ENCODE measurements at regions of chr13 and their contacts with region 1.

Region 1: DNA sequence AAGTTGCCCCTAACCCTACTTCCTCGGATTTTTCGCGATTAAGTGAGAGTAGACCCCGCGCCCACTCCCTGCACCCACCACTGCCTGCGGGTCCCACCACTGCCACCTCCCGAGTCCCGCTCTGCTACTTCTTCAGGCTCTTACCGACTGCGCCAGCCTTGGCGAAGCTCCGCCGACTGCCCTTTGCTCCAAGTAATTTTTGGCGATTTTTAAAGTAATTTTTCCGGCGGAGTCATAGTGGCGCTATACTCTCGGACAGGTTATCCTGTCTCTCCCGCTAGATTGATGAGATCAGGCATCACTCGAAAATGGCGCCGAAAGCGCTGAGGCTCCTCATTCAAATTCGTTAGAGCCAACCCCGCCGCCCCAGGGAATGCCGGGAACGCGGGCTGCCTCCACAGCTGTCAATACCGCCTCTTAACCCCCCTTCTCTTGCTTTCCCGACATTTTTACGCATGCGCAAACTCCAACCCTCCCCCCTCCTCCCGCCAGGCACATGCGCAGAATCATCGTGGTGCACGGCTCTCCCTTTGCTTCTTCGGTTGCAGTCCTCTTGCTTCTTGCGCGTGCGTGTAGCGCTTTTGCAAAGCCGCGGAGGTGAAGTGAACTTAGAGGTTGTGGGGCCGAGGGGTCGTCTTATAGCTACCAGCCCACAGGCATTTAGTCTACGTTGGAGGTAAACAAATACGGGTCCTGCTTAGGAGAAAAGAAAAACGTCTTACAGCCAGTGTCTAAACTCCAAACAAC is 66.6 kb downstream of the KCNRG start:
- DNase-seq: peak; percentile 98
- H3K4me3 ChIP-seq: peak overlapping the region; percentile 70 to 83
- H3K27ac ChIP-seq: peak overlapping the region; percentile 93 to 98
- H3K4me1 ChIP-seq: no peaks in the 10 kb centered on the region
- H3K27me3 ChIP-seq: no peaks in the 10 kb centered on the region
- CTCF ChIP-seq: peak in 2 of 4 experiments; percentile 15 to 17
- POLR2A ChIP-seq: peak; percentile 35 to 63

Region 2: GRCh38 chr13:49996951-49997895 is 84.6 kb before region 1 on chr13 and contains the start of gene TRIM13:
- intact Hi-C with region 1: loop called (anchors 2 kb)
- DNase-seq: peak; percentile 88 to 90
- H3K4me3 ChIP-seq: peak within 1 kb of the TSS; percentile 70 to 84
- H3K27ac ChIP-seq: peak within 1 kb of the TSS; percentile 98
- H3K4me1 ChIP-seq: peaks cover 5 to 13% of the 10 kb centered on the region in 2 donors
- H3K27me3 ChIP-seq: no peaks in the 10 kb centered on the region
- CTCF ChIP-seq: peak; percentile 59 to 89 (median 73)
- POLR2A ChIP-seq: peak; percentile 62 to 70
- total RNA-seq, gene TRIM13: 19.7 to 54.5 (median 31.0) TPM

Measured in uterus (tissue), 4 donors.